HEK293 (cell line): ENCODE measurements at regions of chr12 and their contacts with region 1.

Region 1: DNA sequence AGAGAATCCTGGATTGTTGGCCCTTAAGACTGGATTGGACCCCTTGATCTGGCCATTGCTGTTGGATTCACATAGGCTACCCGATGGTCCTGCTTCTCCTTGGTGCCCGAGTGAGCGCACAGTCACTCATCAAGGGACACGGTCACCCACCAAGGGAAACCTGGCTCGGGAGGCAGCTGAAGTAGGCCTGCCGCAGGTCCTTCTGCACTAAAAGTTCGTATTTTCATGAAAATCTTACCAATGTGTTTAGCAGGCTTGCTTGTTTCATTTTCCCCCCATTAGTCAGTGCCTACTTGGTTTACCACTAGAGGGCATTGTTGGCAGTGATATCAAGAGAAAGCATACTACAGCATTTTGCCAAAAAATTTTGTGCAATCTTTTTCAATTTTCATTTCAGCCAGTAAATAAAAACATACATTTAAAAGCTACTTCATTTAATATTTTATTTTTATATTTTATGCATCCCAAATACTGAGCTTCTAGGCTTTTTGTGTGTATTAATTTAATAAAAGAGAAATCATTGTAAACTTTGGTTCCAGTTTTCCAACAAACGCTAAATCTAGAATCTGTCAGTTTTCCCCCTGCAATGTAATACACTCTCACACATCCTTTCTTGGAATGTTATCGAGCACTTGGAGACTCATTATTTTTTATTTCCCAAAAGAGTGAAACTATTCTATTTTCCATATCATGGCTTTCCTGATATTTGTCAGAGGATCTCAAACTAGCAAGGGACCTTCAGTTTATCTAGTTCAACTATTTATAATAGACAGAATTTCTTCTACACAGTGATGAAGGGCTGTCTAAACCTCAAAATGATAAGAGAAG is 116.7 kb downstream of the LMNTD1 start:
- H3K4me3 ChIP-seq: no peak overlapping the region
- H3K27ac ChIP-seq: no peak overlapping the region
- H3K4me1 ChIP-seq: peaks cover 12% of the 10 kb centered on the region; the same call in 1 of the 2 replicates
- CTCF ChIP-seq: 0 out of 2 replicates have a peak, but pooled peaks have one; percentile 17

Region 2: GRCh38 chr12:24705741-24706358 is 730.6 kb before region 1 on chr12:
- CTCF ChIA-PET with region 1: no interaction called
- POLR2A ChIA-PET with region 1: no interaction called
- H3K4me3 ChIP-seq: no peak overlapping the region
- H3K27ac ChIP-seq: no peak overlapping the region
- H3K4me1 ChIP-seq: no peaks in the 10 kb centered on the region
- CTCF ChIP-seq: no peak

Region 3: GRCh38 chr12:25424211-25424731 is 12.1 kb before region 1 on chr12:
- CTCF ChIA-PET with region 1: interaction called, 17 read pairs
- POLR2A ChIA-PET with region 1: no interaction called
- H3K4me3 ChIP-seq: no peak overlapping the region
- H3K27ac ChIP-seq: no peak overlapping the region
- H3K4me1 ChIP-seq: no peaks in the 10 kb centered on the region
- CTCF ChIP-seq: no peak

Region 4: GRCh38 chr12:25557830-25558436 is 121.5 kb after region 1 on chr12:
- CTCF ChIA-PET with region 1: interaction called, 16 read pairs
- POLR2A ChIA-PET with region 1: no interaction called
- H3K4me3 ChIP-seq: no peak overlapping the region
- H3K27ac ChIP-seq: no peak overlapping the region
- H3K4me1 ChIP-seq: no peaks in the 10 kb centered on the region
- CTCF ChIP-seq: no peak

Region 5: GRCh38 chr12:25573346-25573745 is 136.9 kb after region 1 on chr12:
- CTCF ChIA-PET with region 1: interaction called, 10 read pairs
- POLR2A ChIA-PET with region 1: no interaction called
- H3K4me3 ChIP-seq: no peak overlapping the region
- H3K27ac ChIP-seq: no peak overlapping the region
- H3K4me1 ChIP-seq: no peaks in the 10 kb centered on the region
- CTCF ChIP-seq: no peak

Region 6: GRCh38 chr12:26028953-26029735 is 592.7 kb after region 1 on chr12:
- CTCF ChIA-PET with region 1: interaction called, 17 read pairs
- POLR2A ChIA-PET with region 1: no interaction called
- H3K4me3 ChIP-seq: no peak overlapping the region
- H3K27ac ChIP-seq: no peak overlapping the region
- H3K4me1 ChIP-seq: peaks cover 25% of the 10 kb centered on the region
- CTCF ChIP-seq: no peak; the same call in 1 of the 2 replicates